Uterus (tissue), 4 donors: ENCODE measurements at regions of chr22 and their contacts with region 1.

Region 1: GRCh38 chr22:23521441-23522113 is 58.5 kb downstream of the IGLL1 start:
- DNase-seq: peak; percentile 83 to 86
- H3K4me3 ChIP-seq: peak overlapping the region; percentile 36 to 51
- H3K27ac ChIP-seq: peak overlapping the region; percentile 85 to 88
- H3K4me1 ChIP-seq: peaks cover 0 to 6% of the 10 kb centered on the region in 2 donors
- H3K27me3 ChIP-seq: no peaks in the 10 kb centered on the region
- CTCF ChIP-seq: peak in 3 of 4 experiments; percentile 14 to 25 (median 22)
- POLR2A ChIP-seq: peak; percentile 4 to 70

Region 2: GRCh38 chr22:23289851-23290724 is 231.5 kb before region 1 on chr22:
- intact Hi-C with region 1: no loop called
- DNase-seq: peak in 1 of 2 donors; percentile 41
- H3K4me3 ChIP-seq: no peak overlapping the region
- H3K27ac ChIP-seq: no peak overlapping the region
- H3K4me1 ChIP-seq: no peaks in the 10 kb centered on the region
- H3K27me3 ChIP-seq: no peaks in the 10 kb centered on the region
- CTCF ChIP-seq: peak; percentile 42 to 59 (median 56)
- POLR2A ChIP-seq: no peak

Region 3: DNA sequence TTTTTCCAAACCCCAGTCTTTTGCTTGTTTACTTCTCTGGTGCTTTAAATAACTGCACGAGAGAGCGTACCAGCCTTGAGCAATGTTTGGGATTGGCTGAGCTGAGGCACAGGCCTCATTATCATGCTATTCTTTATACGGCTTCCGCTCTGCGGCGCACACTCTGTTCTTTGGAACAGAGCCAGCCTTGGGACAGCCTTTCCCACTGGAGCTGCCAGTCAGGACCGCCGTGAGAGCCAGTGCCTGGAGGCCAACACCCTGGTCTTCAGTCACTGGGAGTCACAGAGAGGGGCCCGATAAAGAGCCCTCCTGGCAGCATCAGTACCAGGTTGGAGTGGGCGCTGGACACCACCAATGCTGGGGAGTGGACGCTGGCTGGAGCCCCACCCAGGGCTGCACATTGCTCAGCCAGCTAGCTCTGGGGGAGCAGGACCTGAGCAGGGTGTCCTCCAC is 215.6 kb before region 1 on chr22:
- intact Hi-C with region 1: loop called (anchors 10 kb)
- DNase-seq: peak; percentile 54 to 77
- H3K4me3 ChIP-seq: no peak overlapping the region
- H3K27ac ChIP-seq: peak overlapping the region; percentile 75 to 91
- H3K4me1 ChIP-seq: no peaks in the 10 kb centered on the region
- H3K27me3 ChIP-seq: no peaks in the 10 kb centered on the region
- CTCF ChIP-seq: no peak
- POLR2A ChIP-seq: no peak

Region 4: GRCh38 chr22:23692598-23693291 is 171.2 kb after region 1 on chr22:
- intact Hi-C with region 1: no loop called
- DNase-seq: no peak
- H3K4me3 ChIP-seq: no peak overlapping the region
- H3K27ac ChIP-seq: no peak overlapping the region
- H3K4me1 ChIP-seq: no peaks in the 10 kb centered on the region
- H3K27me3 ChIP-seq: no peaks in the 10 kb centered on the region
- CTCF ChIP-seq: no peak
- POLR2A ChIP-seq: no peak